ENCODE measurements at regions of chr2 and their contacts with region 1.

Region 1: DNA sequence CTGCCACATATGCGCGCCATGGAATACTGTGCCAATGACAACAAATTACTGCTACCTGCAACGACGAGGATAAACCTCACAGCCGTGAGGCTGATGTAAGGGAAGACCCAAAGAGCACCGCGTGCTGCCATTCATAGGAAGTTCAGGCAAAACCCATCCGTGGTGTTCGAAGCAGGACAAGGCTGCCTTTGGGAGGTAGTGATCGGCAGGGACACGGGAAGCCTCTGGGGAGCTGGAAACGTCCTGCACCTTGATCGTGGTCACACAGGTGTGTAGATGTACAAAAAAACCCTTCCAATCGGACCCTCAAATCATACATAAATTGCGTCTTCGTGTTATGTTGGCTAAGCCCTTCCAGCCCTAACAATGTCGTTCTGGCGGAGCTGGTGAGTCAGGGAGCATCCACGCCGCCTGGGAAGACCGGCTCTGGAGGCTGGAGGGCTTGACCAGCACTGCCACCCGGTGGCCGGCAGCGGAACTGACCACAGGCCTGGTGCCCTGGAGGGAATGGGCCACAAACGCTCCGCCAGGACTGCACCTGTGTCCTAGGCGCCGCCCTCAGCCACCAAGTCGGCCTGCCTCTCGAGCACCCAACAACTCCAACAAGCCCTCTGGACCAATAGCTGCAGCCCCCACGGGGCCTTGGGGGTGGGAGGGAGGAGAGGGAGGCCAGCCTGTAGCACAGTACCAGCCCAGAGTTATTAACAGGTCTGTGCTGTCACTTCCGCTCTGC is 4.1 kb upstream of the NEURL3 start:
- DNase-seq: peak; percentile 67 to 85
- ATAC-seq: peak; percentile 74 to 86
- H3K4me3 ChIP-seq: no peak overlapping the region
- H3K27ac ChIP-seq: peak overlapping the region in 1 of 2 experiments; percentile 40; a peak in 1 of 6 replicates
- H3K4me1 ChIP-seq: peaks cover 24% of the 10 kb centered on the region
- CTCF ChIP-seq: peak; percentile 89
- EP300 ChIP-seq: no peak
- POLR2A ChIP-seq: no peak
- RAD21 ChIP-seq: peak; percentile 95 to 97

Region 2: DNA sequence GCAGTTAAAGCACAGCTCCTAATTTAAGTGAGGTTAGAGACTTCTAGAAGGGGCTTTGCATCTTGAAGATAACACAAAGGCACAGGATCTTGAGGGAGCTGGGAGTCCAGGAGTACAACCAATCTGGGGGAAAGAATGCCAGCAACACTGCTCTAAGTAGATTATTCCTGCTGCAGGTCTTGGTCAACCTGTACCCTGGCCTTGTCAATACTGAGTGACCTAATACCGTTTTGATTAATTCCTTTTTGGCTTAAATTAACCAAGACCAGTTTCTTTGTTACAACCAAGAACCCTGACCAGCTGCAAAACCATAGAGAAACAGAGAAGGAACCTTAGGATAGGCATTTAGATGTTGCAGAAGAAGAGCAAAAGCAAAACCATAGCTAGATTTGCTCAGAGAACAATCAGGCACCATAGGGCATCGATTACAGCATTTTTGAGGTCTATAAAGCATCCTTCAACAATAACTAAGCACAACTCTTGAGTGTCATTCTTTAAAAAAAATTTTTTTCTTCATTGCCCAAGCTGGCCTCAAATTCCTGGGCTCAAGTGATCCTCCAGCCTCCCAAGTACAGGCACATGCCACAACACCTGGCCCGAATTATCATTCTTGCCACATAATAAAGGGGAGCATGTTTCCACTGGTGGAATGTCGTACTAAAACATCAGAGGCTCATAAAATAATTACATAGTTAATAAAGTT is 307.0 kb before region 1 on chr2:
- CTCF ChIA-PET with region 1: no interaction called
- POLR2A ChIA-PET with region 1: no interaction called
- DNase-seq: no peak
- ATAC-seq: no peak
- H3K4me3 ChIP-seq: no peak overlapping the region
- H3K27ac ChIP-seq: no peak overlapping the region
- H3K4me1 ChIP-seq: peaks cover 66% of the 10 kb centered on the region
- CTCF ChIP-seq: no peak
- EP300 ChIP-seq: no peak
- POLR2A ChIP-seq: no peak
- RAD21 ChIP-seq: no peak

Region 3: DNA sequence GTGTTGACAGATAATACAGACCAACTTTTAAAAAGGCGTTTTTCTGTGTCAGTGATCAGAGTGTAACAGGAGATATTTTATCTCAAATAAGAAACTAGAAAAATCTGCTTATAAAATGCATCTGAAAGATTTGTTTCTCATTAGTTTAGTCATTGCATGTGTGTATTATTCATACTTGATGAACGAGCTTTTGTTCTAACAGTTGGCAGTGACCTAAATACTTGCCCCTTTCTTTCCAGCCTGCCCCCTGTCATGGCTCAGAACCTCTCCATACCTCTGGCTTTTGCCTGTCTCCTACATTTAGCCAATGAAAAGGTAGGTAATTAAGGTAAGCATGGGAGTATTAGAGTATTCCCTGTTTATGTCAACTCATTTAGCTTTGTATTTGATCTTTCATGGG is 140.1 kb before region 1 on chr2:
- CTCF ChIA-PET with region 1: interaction called, 11 read pairs
- POLR2A ChIA-PET with region 1: no interaction called
- DNase-seq: no peak
- ATAC-seq: no peak
- H3K4me3 ChIP-seq: no peak overlapping the region
- H3K27ac ChIP-seq: no peak overlapping the region
- H3K4me1 ChIP-seq: no peaks in the 10 kb centered on the region
- CTCF ChIP-seq: no peak
- EP300 ChIP-seq: no peak
- POLR2A ChIP-seq: no peak
- RAD21 ChIP-seq: no peak

Region 4: DNA sequence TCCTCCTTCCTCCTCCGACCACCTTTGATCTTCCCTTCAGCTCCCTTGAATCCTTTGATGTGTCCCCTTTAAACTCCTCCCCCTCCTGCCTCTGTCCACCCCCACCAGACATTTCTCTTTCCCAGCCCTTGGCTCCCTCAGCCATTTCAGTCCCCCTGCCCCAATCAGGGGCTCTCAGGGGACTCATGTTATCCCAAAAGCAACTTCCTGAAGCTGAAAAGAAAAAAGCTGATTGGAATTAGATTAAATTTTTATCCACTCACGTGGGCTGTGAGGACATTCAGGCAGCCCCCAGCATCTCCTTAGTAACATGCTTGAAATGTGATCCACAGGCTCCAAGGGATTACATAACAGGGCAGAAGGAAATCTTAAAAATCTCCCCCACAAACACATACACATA is 85.5 kb before region 1 on chr2:
- CTCF ChIA-PET with region 1: interaction called, 16 read pairs
- POLR2A ChIA-PET with region 1: no interaction called
- DNase-seq: no peak
- ATAC-seq: no peak
- H3K4me3 ChIP-seq: no peak overlapping the region
- H3K27ac ChIP-seq: peak overlapping the region in 1 of 2 experiments; percentile 5; a peak in 1 of 6 replicates
- H3K4me1 ChIP-seq: peaks cover 27% of the 10 kb centered on the region
- CTCF ChIP-seq: no peak
- EP300 ChIP-seq: no peak
- POLR2A ChIP-seq: no peak
- RAD21 ChIP-seq: no peak

Region 5: GRCh38 chr2:96471772-96472171 is 37.5 kb before region 1 on chr2:
- CTCF ChIA-PET with region 1: interaction called, 17 read pairs
- POLR2A ChIA-PET with region 1: no interaction called
- DNase-seq: no peak
- ATAC-seq: no peak
- H3K4me3 ChIP-seq: no peak overlapping the region
- H3K27ac ChIP-seq: no peak overlapping the region
- H3K4me1 ChIP-seq: no peaks in the 10 kb centered on the region
- CTCF ChIP-seq: no peak
- EP300 ChIP-seq: no peak
- POLR2A ChIP-seq: no peak
- RAD21 ChIP-seq: no peak

Region 6: GRCh38 chr2:96523659-96524481 is 14.6 kb after region 1 on chr2:
- CTCF ChIA-PET with region 1: interaction called, 63 read pairs
- POLR2A ChIA-PET with region 1: no interaction called
- DNase-seq: no peak
- ATAC-seq: 0 out of 6 replicates have a peak, but pooled peaks of 1 of the 2 experiments have one; percentile 14
- H3K4me3 ChIP-seq: no peak overlapping the region
- H3K27ac ChIP-seq: no peak overlapping the region
- H3K4me1 ChIP-seq: no peaks in the 10 kb centered on the region
- CTCF ChIP-seq: no peak
- EP300 ChIP-seq: no peak
- POLR2A ChIP-seq: no peak
- RAD21 ChIP-seq: no peak

Measured in A549 (cell line).